CD4-positive, alpha-beta memory T cell (primary cell): ENCODE measurements at regions of chr16 and their contacts with region 1.

Region 1: GRCh38 chr16:1610276-1611017 is 1.4 kb downstream of the IFT140 start:
- DNase-seq: peak; percentile 90 to 93 (median 91)
- H3K4me3 ChIP-seq: peak overlapping the region in 1 of 2 donors; percentile 71
- H3K4me3 Mint-ChIP-seq: peak overlapping the region; percentile 68 to 88 (median 76)
- H3K27ac ChIP-seq: peak overlapping the region; percentile 64
- H3K27ac Mint-ChIP-seq: peak overlapping the region; percentile 64 to 98 (median 85)
- H3K4me1 ChIP-seq: peaks cover 40% of the 10 kb centered on the region
- H3K4me1 Mint-ChIP-seq: peaks cover 21 to 40% (median 23%) of the 10 kb centered on the region in 4 donors
- H3K27me3 ChIP-seq: no peaks in the 10 kb centered on the region
- H3K27me3 Mint-ChIP-seq: peaks cover 2 to 3% of the 10 kb centered on the region in 2 donors

Region 2: GRCh38 chr16:1420111-1420540 is 190.3 kb before region 1 on chr16:
- CTCF ChIA-PET with region 1: no interaction called
- POLR2A ChIA-PET with region 1: interaction called, 5 read pairs
- intact Hi-C with region 1: loop called (anchors 1 kb)
- DNase-seq: no peak
- H3K4me3 ChIP-seq: peak overlapping the region; percentile 64 to 78
- H3K4me3 Mint-ChIP-seq: peak overlapping the region; percentile 79 to 97 (median 92)
- H3K27ac ChIP-seq: peak overlapping the region; percentile 85
- H3K27ac Mint-ChIP-seq: peak overlapping the region; percentile 64 to 100 (median 91)
- H3K4me1 ChIP-seq: peaks cover 12% of the 10 kb centered on the region
- H3K4me1 Mint-ChIP-seq: peaks cover 5 to 29% (median 15%) of the 10 kb centered on the region in 4 donors
- H3K27me3 ChIP-seq: no peaks in the 10 kb centered on the region
- H3K27me3 Mint-ChIP-seq: peaks cover 0 to 3% of the 10 kb centered on the region in 2 donors

Region 3: GRCh38 chr16:1492923-1493745 is 117.3 kb before region 1 on chr16 and contains the start of gene TELO2:
- CTCF ChIA-PET with region 1: no interaction called
- POLR2A ChIA-PET with region 1: interaction called, 3 read pairs
- intact Hi-C with region 1: loop called (anchors 5 kb)
- DNase-seq: peak; percentile 85 to 93 (median 88)
- H3K4me3 ChIP-seq: peak within 1 kb of the TSS; percentile 48 to 72
- H3K4me3 Mint-ChIP-seq: peak within 1 kb of the TSS; percentile 93 to 98 (median 95)
- H3K27ac ChIP-seq: peak within 1 kb of the TSS; percentile 78
- H3K27ac Mint-ChIP-seq: peak within 1 kb of the TSS; percentile 93 to 100 (median 99)
- H3K4me1 ChIP-seq: peaks cover 20% of the 10 kb centered on the region
- H3K4me1 Mint-ChIP-seq: peaks cover 7 to 22% (median 15%) of the 10 kb centered on the region in 4 donors
- H3K27me3 ChIP-seq: no peaks in the 10 kb centered on the region
- H3K27me3 Mint-ChIP-seq: peaks cover 0 to 1% of the 10 kb centered on the region in 2 donors
- total RNA-seq, gene TELO2: 55.3 to 56.0 TPM

Region 4: GRCh38 chr16:1543085-1543896 is 67.2 kb before region 1 on chr16:
- CTCF ChIA-PET with region 1: interaction called, 4 read pairs
- POLR2A ChIA-PET with region 1: interaction called, 9 read pairs
- intact Hi-C with region 1: loop called (anchors 5 kb)
- DNase-seq: peak in 4 of 5 donors; percentile 15 to 76 (median 38)
- H3K4me3 ChIP-seq: peak overlapping the region in 1 of 2 donors; percentile 6
- H3K4me3 Mint-ChIP-seq: peak overlapping the region in 7 of 8 donors; percentile 72 to 84 (median 79)
- H3K27ac ChIP-seq: peak overlapping the region; percentile 42
- H3K27ac Mint-ChIP-seq: peak overlapping the region; percentile 27 to 94 (median 80)
- H3K4me1 ChIP-seq: peaks cover 85% of the 10 kb centered on the region
- H3K4me1 Mint-ChIP-seq: peaks cover 29 to 90% (median 66%) of the 10 kb centered on the region in 4 donors
- H3K27me3 ChIP-seq: no peaks in the 10 kb centered on the region
- H3K27me3 Mint-ChIP-seq: no peaks in the 10 kb centered on the region

Region 5: DNA sequence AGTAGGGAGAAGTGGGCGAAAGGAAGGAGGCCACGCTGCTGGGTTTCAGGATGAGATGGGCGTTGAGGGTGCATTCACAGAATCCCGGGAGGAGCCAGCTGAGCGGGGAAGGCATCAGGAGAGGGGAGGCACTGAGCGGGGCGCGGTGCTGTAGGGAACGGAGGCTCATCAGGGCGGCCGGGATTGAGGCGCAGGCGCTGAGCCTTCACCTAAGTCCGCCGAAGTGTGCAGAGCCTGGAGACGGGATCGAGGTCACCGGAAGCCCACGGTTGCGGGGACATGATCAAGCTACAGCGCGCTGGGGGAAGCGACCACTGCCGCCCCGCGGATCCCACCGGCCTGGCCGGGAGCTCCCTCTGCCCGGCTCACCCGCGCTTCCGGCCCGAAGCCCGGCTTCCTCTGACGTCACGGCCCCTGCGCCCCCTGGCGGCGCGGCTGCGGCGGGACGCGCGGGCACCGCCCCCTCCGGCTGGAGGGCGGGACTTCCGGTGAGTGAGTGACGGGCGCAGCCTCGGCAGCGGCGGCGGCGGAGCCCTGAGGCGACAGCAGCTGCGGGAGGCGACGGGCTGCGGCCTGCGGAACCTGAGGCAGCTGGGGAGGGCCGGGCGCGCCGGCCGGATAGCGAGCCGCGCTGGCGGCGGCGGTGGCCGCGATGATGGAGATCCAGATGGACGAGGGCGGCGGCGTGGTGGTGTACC is 95.4 kb after region 1 on chr16 and contains the start of gene MAPK8IP3:
- CTCF ChIA-PET with region 1: interaction called, 8 read pairs
- POLR2A ChIA-PET with region 1: interaction called, 14 read pairs
- intact Hi-C with region 1: loop called (anchors 2 kb)
- DNase-seq: peak; percentile 87 to 99 (median 95)
- H3K4me3 ChIP-seq: peak within 1 kb of the TSS; percentile 81 to 99
- H3K4me3 Mint-ChIP-seq: peak within 1 kb of the TSS; percentile 90 to 100 (median 99)
- H3K27ac ChIP-seq: peak within 1 kb of the TSS; percentile 88
- H3K27ac Mint-ChIP-seq: peak within 1 kb of the TSS; percentile 95 to 100 (median 99)
- H3K4me1 ChIP-seq: peaks cover 40% of the 10 kb centered on the region
- H3K4me1 Mint-ChIP-seq: peaks cover 17 to 46% (median 29%) of the 10 kb centered on the region in 4 donors
- H3K27me3 ChIP-seq: no peaks in the 10 kb centered on the region
- H3K27me3 Mint-ChIP-seq: no peaks in the 10 kb centered on the region
- total RNA-seq, gene MAPK8IP3: 238 to 248 TPM

Region 6: DNA sequence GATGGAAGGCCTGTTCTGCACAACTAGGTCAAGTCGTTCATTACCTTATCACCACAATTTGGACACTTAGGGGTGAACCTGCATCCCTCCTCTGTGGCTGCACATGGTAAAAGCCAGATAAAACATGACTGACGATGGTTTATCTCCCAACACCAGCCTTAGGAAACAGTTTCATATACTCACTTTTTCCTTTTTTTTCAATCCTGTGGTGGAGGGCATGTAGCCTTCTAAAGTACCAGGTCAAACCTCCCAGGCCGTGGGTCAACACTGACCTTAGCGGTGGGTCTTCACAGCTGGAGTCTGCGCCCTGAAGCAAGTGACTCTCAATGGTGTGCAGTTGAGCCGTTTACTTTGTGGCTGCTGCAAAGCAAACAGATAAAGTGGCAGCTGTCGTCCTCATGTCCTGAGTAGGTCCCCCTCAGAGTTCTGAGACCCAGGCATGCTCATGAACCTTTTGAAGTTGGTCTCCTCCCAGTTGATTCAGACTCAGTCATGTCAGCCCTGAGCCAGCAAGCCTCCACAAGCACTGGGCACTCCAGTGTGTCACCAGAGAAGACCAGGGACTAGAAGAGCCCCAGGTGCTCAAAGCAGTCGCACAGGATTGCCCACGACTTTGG is 222.5 kb after region 1 on chr16:
- CTCF ChIA-PET with region 1: no interaction called
- POLR2A ChIA-PET with region 1: no interaction called
- intact Hi-C with region 1: no loop called
- DNase-seq: no peak
- H3K4me3 ChIP-seq: no peak overlapping the region
- H3K4me3 Mint-ChIP-seq: no peak overlapping the region
- H3K27ac ChIP-seq: no peak overlapping the region
- H3K27ac Mint-ChIP-seq: peak overlapping the region in 1 of 7 donors; percentile 35
- H3K4me1 ChIP-seq: peaks cover 13% of the 10 kb centered on the region
- H3K4me1 Mint-ChIP-seq: peaks cover 9 to 24% (median 18%) of the 10 kb centered on the region in 4 donors
- H3K27me3 ChIP-seq: no peaks in the 10 kb centered on the region
- H3K27me3 Mint-ChIP-seq: no peaks in the 10 kb centered on the region

Region 7: DNA sequence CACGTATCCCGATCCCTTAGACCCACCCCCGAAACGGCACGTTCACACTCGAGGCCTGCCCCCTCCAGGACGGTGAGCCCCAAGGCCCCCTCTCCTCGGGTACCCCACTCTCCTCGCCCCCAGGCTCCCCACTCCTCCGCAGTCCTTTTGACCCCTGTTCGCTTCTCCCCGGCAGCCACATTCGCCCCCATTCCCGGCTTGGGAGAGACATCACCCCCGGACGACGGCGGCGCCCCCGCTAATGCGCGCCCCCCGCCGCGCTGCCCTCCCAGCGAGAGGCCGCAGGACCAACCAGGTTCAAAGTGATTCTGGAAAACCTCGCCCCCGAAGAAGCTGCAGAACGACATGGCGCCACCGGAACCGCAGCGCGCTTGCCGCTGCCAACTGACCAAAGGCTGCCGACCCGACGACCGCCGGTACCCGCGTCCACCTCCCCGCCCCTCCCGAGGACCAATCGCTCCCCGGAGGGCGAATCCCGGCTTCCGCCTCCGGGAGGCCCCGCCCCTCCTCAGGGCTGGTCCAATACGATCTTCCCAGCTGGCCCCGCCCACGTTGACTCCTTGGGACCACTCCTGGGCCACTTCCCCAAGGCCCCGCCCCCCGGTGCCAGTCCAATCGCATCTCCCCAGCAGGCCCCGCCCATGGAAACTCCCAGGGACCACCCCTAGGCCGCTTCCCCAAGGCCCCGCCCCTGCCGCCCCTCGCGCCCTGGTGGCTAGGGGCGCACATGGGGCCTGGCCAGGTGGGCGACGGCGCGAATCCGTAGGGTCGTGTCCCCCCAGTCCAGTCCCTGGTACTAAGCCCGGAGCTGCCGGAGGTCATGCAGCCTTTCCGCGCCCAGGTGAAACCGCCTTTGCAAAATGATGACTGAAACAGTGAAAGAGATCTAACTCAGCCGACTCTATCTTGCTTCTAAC is 332.6 kb after region 1 on chr16 and contains the start of gene MSRB1:
- CTCF ChIA-PET with region 1: no interaction called
- POLR2A ChIA-PET with region 1: no interaction called
- intact Hi-C with region 1: loop called (anchors 5 kb)
- DNase-seq: peak; percentile 97 to 99 (median 98)
- H3K4me3 ChIP-seq: peak within 1 kb of the TSS; percentile 52 to 90
- H3K4me3 Mint-ChIP-seq: peak within 1 kb of the TSS; percentile 82 to 91 (median 86)
- H3K27ac ChIP-seq: peak within 1 kb of the TSS; percentile 58
- H3K27ac Mint-ChIP-seq: peak within 1 kb of the TSS; percentile 64 to 91 (median 70)
- H3K4me1 ChIP-seq: peaks cover 21% of the 10 kb centered on the region
- H3K4me1 Mint-ChIP-seq: peaks cover 0 to 26% (median 7%) of the 10 kb centered on the region in 4 donors
- H3K27me3 ChIP-seq: no peaks in the 10 kb centered on the region
- H3K27me3 Mint-ChIP-seq: no peaks in the 10 kb centered on the region
- total RNA-seq, gene MSRB1: 9.3 to 10.6 TPM